ENCODE measurements at regions of chr18 and their contacts with region 1.

Region 1: GRCh38 chr18:70195852-70196434 is 9.5 kb downstream of the RTTN start:
- H3K4me3 Mint-ChIP-seq: no peak overlapping the region
- H3K27ac Mint-ChIP-seq: no peak overlapping the region
- H3K4me1 Mint-ChIP-seq: no peaks in the 10 kb centered on the region
- H3K27me3 Mint-ChIP-seq: no peaks in the 10 kb centered on the region

Region 2: DNA sequence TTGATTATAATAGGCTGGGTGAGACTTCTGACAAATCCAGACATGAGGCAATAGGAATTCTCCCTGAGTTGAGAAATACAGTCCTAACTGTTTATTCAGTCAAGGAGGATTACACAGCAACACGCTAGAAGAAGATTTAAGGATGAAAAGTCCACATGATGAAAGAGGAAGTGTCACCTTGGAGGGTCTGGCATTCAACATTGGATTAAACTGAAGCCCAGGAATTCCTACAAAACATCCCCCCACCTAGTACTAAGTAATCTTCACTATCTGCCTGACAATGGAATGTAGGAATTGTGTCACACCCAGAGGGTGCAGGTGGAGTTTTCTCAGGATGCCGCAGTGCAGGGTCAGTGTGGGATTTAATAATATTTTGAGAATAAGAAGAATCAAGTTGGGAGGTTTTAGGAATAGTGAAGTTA is 235.3 kb after region 1 on chr18:
- intact Hi-C with region 1: loop called (anchors 1 kb)
- H3K4me3 Mint-ChIP-seq: no peak overlapping the region
- H3K27ac Mint-ChIP-seq: no peak overlapping the region
- H3K4me1 Mint-ChIP-seq: peaks cover 24% of the 10 kb centered on the region
- H3K27me3 Mint-ChIP-seq: peaks cover 4% of the 10 kb centered on the region

Region 3: DNA sequence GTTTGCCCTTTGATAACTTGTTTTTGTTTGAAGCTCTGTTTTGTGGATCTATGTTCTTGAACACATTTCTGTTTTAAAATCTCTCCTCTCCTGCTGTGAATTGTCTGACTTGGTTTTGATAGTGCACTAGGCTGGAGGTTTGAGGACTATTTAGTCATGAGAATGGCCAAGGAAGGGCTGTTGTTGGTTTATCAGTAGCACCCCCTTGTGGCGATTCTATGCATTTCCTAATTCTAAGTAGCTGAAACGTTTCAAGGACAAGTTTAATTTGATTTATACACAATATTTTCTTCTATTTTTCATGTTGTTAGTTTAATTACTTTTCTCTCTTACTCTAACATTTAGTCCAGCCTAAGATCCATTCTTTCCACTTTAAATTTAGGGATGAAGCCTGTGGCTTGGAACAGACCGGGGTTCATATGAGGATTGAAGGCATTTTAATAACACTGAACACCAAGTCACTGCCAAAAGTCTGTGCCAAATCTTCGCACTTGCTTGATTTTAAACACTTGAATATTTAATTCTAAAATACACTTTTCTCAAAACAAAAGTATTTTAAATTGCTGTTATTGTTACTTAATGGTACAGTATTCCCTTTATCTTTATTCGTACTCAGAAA is 258.9 kb after region 1 on chr18:
- intact Hi-C with region 1: loop called (anchors 5 kb)
- H3K4me3 Mint-ChIP-seq: no peak overlapping the region
- H3K27ac Mint-ChIP-seq: no peak overlapping the region
- H3K4me1 Mint-ChIP-seq: peaks cover 10% of the 10 kb centered on the region
- H3K27me3 Mint-ChIP-seq: peaks cover under 1% of the 10 kb centered on the region